Right cardiac atrium (tissue), 5 donors: ENCODE measurements at regions of chr15 and their contacts with region 1.

Region 1: GRCh38 chr15:57923306-57923705 is 142.2 kb downstream of the ALDH1A2 start:
- DNase-seq: no peak
- ATAC-seq: peak; percentile 91 to 92
- H3K4me3 ChIP-seq: no peak overlapping the region
- H3K27ac ChIP-seq: peak overlapping the region; percentile 90
- H3K4me1 ChIP-seq: peaks cover 10% of the 10 kb centered on the region
- H3K27me3 ChIP-seq: no peaks in the 10 kb centered on the region

Region 2: DNA sequence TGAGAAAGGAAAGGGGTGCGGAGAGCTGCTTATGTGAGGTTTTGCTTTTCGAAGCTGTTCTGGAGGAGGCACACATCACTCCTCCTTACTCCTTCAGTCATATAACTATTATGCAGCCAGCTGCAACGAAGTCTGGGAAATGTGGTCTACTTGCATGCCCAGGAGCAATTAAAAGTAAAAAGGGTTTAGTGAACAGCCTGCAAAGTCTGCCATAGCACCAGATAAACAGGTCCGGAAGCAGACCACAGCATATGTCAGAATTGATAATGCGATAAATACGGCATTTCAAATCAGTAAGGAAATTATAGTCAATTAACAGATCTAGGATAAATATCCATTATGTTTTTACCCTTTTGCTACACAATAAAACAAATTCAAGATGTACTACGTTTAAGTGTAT is 117.3 kb before region 1 on chr15:
- intact Hi-C with region 1: no loop called
- DNase-seq: no peak
- ATAC-seq: no peak
- H3K4me3 ChIP-seq: no peak overlapping the region
- H3K27ac ChIP-seq: no peak overlapping the region
- H3K4me1 ChIP-seq: no peaks in the 10 kb centered on the region
- H3K27me3 ChIP-seq: no peaks in the 10 kb centered on the region

Region 3: DNA sequence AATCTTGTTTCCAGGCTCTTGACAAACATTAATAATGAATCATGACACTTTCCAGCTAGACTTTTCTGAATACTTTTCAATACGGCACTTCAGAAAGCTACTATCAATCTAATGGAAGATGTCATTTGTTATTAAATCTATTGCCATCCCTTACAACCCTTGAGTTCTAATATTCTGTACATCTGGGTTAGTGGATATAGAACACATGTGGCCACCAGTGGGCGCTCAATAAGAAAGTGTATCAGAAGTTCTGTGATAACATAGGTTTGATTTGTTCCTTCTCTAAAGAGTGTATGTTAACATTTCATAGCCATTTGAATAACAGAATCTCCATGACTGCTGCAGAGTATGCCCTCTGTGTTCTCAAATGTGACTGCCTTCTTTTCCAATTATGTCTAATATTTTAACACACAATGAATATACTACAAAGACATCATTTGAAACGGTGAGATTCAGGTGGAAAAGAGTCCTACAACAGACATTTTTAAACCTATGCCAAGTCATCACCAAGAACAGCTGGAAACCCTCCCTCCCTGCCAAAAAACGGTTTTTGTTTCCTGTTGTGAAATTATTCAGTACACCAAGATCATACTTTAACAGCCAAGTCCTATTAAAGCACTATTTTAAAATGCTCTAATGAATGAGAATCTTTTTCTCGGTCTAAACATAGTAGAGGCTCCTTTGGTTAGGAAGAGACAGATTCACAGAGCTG is 120.0 kb after region 1 on chr15:
- intact Hi-C with region 1: loop called in 1 of 4 experiments (anchors 10 kb)
- DNase-seq: peak in 1 of 3 donors; percentile 69
- ATAC-seq: peak; percentile 30 to 36
- H3K4me3 ChIP-seq: no peak overlapping the region
- H3K27ac ChIP-seq: no peak overlapping the region
- H3K4me1 ChIP-seq: no peaks in the 10 kb centered on the region
- H3K27me3 ChIP-seq: no peaks in the 10 kb centered on the region